ENCODE measurements at regions of chr19 and their contacts with region 1.

Region 1: GRCh38 chr19:8307965-8308866 is at the start of gene CD320:
- DNase-seq: peak; percentile 91 to 96 (median 94)
- ATAC-seq: peak; percentile 92
- H3K4me3 ChIP-seq: peak within 1 kb of the TSS; percentile 51
- H3K27ac ChIP-seq: peak within 1 kb of the TSS; percentile 85
- H3K4me1 ChIP-seq: peaks cover 28 to 63% of the 10 kb centered on the region in 2 experiments; a peak in 4 of 5 replicates
- H3K27me3 ChIP-seq: no peaks in the 10 kb centered on the region
- CTCF ChIP-seq: peak in 1 of 3 experiments; percentile 14; a peak in 1 of 6 replicates
- EP300 ChIP-seq: no peak; the same call in 1 of the 2 replicates
- POLR2A ChIP-seq: peak; percentile 90
- RAD21 ChIP-seq: no peak
- polyA plus RNA-seq, gene CD320: 0.45 to 2.5 TPM

Region 2: GRCh38 chr19:8028951-8029491 is 279.2 kb before region 1 on chr19:
- CTCF ChIA-PET with region 1: no interaction called
- POLR2A ChIA-PET with region 1: no interaction called
- in situ Hi-C with region 1: no loop called
- intact Hi-C with region 1: no loop called
- DNase-seq: peak; percentile 29 to 47 (median 42)
- ATAC-seq: peak; percentile 24; the same call in 1 of the 3 replicates
- H3K4me3 ChIP-seq: no peak overlapping the region
- H3K27ac ChIP-seq: no peak overlapping the region
- H3K4me1 ChIP-seq: peaks cover 9 to 28% of the 10 kb centered on the region in 2 experiments
- H3K27me3 ChIP-seq: no peaks in the 10 kb centered on the region
- CTCF ChIP-seq: peak in 2 of 3 experiments; percentile 23 to 32; a peak in 3 of 6 replicates
- EP300 ChIP-seq: no peak
- POLR2A ChIP-seq: no peak
- RAD21 ChIP-seq: no peak

Region 3: GRCh38 chr19:8269724-8270123 is 38.5 kb before region 1 on chr19:
- CTCF ChIA-PET with region 1: no interaction called
- POLR2A ChIA-PET with region 1: interaction called, 3 read pairs
- in situ Hi-C with region 1: loop called (anchors 5 kb)
- intact Hi-C with region 1: no loop called
- DNase-seq: no peak
- ATAC-seq: no peak; the same call in 1 of the 3 replicates
- H3K4me3 ChIP-seq: no peak overlapping the region
- H3K27ac ChIP-seq: no peak overlapping the region
- H3K4me1 ChIP-seq: peaks cover 6 to 9% of the 10 kb centered on the region in 2 experiments; a peak in 4 of 5 replicates
- H3K27me3 ChIP-seq: no peaks in the 10 kb centered on the region
- CTCF ChIP-seq: no peak
- EP300 ChIP-seq: no peak
- POLR2A ChIP-seq: no peak
- RAD21 ChIP-seq: no peak

Region 4: DNA sequence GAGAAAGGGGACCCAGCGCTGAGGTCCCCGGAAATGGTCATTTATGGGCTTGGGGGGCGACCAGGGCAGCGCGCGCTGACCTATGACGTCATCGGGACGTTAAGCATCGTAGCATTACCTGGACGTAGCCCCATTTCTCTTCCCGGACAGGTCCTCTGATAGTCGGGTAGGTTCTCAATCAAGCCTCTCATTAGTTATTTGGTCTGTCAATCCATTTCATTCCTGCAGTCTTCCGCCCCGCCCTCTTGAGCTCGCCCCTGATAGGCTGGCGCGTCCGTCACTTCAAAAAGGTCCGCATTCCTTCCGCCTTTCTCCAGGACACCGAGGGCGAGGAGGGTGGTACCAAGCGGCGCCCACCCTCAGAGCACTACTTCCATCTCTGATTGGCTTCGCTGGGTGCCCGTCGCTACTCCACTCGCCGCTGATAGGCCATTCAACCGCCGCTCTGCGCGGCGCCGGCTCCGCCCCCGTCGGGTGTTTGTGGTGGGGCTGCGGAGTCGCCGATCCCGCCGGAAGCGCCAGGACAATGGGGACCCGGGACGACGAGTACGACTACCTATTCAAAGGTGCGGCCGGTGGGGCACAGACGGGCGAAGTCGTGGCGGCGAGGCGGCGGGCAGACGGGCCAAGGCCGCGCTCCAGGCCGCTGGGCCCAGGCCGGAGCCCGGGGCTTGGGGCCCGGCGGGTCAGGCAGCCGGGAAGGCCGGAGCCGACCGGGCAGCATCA is 81.8 kb after region 1 on chr19 and contains the start of gene RAB11B:
- CTCF ChIA-PET with region 1: no interaction called
- POLR2A ChIA-PET with region 1: no interaction called
- in situ Hi-C with region 1: no loop called
- intact Hi-C with region 1: no loop called
- DNase-seq: peak; percentile 90 to 100 (median 95)
- ATAC-seq: peak; percentile 96
- H3K4me3 ChIP-seq: peak within 1 kb of the TSS; percentile 67
- H3K27ac ChIP-seq: peak within 1 kb of the TSS; percentile 94
- H3K4me1 ChIP-seq: peaks cover 17 to 37% of the 10 kb centered on the region in 2 experiments; a peak in 4 of 5 replicates
- H3K27me3 ChIP-seq: no peaks in the 10 kb centered on the region
- CTCF ChIP-seq: no peak
- EP300 ChIP-seq: peak; percentile 24; the same call in 1 of the 2 replicates
- POLR2A ChIP-seq: peak; percentile 62; the same call in 1 of the 2 replicates
- RAD21 ChIP-seq: no peak
- polyA plus RNA-seq, gene RAB11B: 0.74 to 1.0 TPM

Region 5: DNA sequence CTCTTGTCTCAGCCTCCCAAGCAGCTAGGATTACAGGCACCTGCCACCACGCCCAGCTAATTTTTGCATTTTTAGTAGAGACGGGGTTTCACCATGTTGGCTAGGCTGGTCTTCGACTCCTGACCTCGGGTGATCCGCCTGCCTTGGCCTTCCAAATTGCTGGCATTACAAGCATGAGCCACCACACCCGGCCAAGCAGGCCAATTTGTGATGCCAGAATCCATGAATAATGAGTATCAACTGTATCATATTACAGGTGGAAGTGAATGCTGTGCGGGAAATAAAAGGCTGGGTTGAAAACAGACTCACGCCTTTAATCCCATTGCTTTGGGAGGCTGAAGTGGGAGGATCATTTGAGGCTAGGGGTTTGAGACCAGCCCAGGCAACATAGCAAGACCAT is 318.6 kb after region 1 on chr19:
- CTCF ChIA-PET with region 1: no interaction called
- POLR2A ChIA-PET with region 1: no interaction called
- in situ Hi-C with region 1: no loop called
- intact Hi-C with region 1: no loop called
- DNase-seq: no peak
- ATAC-seq: no peak
- H3K4me3 ChIP-seq: no peak overlapping the region
- H3K27ac ChIP-seq: no peak overlapping the region
- H3K4me1 ChIP-seq: no peaks in the 10 kb centered on the region
- H3K27me3 ChIP-seq: peaks cover 7 to 27% of the 10 kb centered on the region in 2 experiments; a peak in 3 of 5 replicates
- CTCF ChIP-seq: no peak
- EP300 ChIP-seq: no peak
- POLR2A ChIP-seq: no peak
- RAD21 ChIP-seq: no peak

Measured in K562 (cell line).